PC-3 (cell line): ENCODE measurements at regions of chr21 and their contacts with region 1.

Region 1: GRCh38 chr21:38913120-38913892 is 107.6 kb downstream of the ETS2 start:
- DNase-seq: peak; percentile 85
- ATAC-seq: peak; percentile 83
- H3K4me3 ChIP-seq: peak overlapping the region; percentile 50; the same call in 1 of the 2 replicates
- H3K27ac ChIP-seq: peak overlapping the region; percentile 66
- H3K4me1 ChIP-seq: peaks cover 57% of the 10 kb centered on the region
- H3K27me3 ChIP-seq: no peaks in the 10 kb centered on the region
- CTCF ChIP-seq: no peak

Region 2: GRCh38 chr21:38851101-38851500 is 62.2 kb before region 1 on chr21:
- CTCF ChIA-PET with region 1: no interaction called
- POLR2A ChIA-PET with region 1: no interaction called
- intact Hi-C with region 1: loop called (anchors 1 kb)
- DNase-seq: no peak
- ATAC-seq: no peak
- H3K4me3 ChIP-seq: no peak overlapping the region
- H3K27ac ChIP-seq: no peak overlapping the region
- H3K4me1 ChIP-seq: peaks cover 41% of the 10 kb centered on the region
- H3K27me3 ChIP-seq: no peaks in the 10 kb centered on the region
- CTCF ChIP-seq: no peak

Region 3: GRCh38 chr21:38879912-38880576 is 33.3 kb before region 1 on chr21:
- CTCF ChIA-PET with region 1: no interaction called
- POLR2A ChIA-PET with region 1: no interaction called
- intact Hi-C with region 1: loop called (anchors 1 kb)
- DNase-seq: no peak
- ATAC-seq: no peak
- H3K4me3 ChIP-seq: no peak overlapping the region
- H3K27ac ChIP-seq: no peak overlapping the region
- H3K4me1 ChIP-seq: peaks cover 7% of the 10 kb centered on the region; the same call in 1 of the 2 replicates
- H3K27me3 ChIP-seq: no peaks in the 10 kb centered on the region
- CTCF ChIP-seq: no peak